Esophagus muscularis mucosa (tissue), 4 donors: ENCODE measurements at regions of chr2 and their contacts with region 1.

Region 1: GRCh38 chr2:204691911-204692510 is 146.7 kb downstream of the PARD3B start:
- DNase-seq: no peak
- H3K4me3 ChIP-seq: no peak overlapping the region
- H3K27ac ChIP-seq: no peak overlapping the region
- H3K4me1 ChIP-seq: peaks cover 6 to 49% (median 41%) of the 10 kb centered on the region in 4 donors
- H3K27me3 ChIP-seq: no peaks in the 10 kb centered on the region
- CTCF ChIP-seq: peak; percentile 72 to 80 (median 80)
- EP300 ChIP-seq: no peak
- POLR2A ChIP-seq: no peak

Region 2: GRCh38 chr2:204260162-204260877 is 431.7 kb before region 1 on chr2:
- intact Hi-C with region 1: loop called (anchors 10 kb)
- DNase-seq: no peak
- H3K4me3 ChIP-seq: no peak overlapping the region
- H3K27ac ChIP-seq: no peak overlapping the region
- H3K4me1 ChIP-seq: peaks cover 0 to 22% (median 21%) of the 10 kb centered on the region in 4 donors
- H3K27me3 ChIP-seq: no peaks in the 10 kb centered on the region
- CTCF ChIP-seq: peak; percentile 78 to 82 (median 80)
- EP300 ChIP-seq: no peak
- POLR2A ChIP-seq: no peak

Region 3: GRCh38 chr2:204545023-204545860 is 146.8 kb before region 1 on chr2 and contains the start of gene PARD3B:
- intact Hi-C with region 1: loop called (anchors 2 kb)
- DNase-seq: no peak
- H3K4me3 ChIP-seq: peak within 1 kb of the TSS; percentile 86 to 97 (median 93)
- H3K27ac ChIP-seq: peak within 1 kb of the TSS; percentile 89 to 92 (median 90)
- H3K4me1 ChIP-seq: peaks cover 7 to 45% (median 43%) of the 10 kb centered on the region in 4 donors
- H3K27me3 ChIP-seq: no peaks in the 10 kb centered on the region
- CTCF ChIP-seq: no peak
- EP300 ChIP-seq: no peak
- POLR2A ChIP-seq: no peak
- total RNA-seq, gene PARD3B: 24.2 to 40.8 (median 32.5) TPM